ENCODE measurements at regions of chr19 and their contacts with region 1.

Region 1: DNA sequence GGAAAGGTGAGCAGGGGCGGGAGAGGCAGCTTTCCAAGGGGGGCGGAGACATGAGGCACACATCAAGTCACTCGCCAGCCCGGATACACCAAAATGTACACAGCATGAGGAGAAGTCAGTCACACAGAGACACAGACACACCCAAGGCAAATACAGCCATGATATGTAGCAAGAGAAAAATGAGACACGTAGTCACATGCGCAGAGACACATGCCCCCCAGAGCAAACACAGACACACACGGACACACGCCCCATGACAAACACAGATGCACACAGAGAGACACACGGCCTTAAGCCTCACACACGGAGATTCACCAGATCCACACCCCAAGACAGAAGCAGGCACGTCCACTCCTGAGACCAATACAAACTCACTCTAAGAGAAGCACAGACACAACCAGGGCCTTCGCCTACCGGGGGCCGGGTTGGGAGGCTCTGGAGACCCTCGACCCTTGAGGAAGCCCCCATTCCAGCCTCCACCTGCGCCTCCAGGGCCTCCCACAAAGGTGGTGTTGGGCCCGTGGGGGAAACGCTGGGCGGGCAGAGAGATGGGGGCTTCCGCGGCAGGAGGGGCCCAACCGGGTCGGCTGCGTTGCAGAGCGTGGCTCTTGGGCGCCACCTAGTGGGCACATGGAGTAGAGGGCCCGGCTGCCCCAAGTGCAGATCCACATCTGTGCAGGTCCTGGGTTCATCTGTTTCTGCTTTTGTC is 10.2 kb upstream of the TINCR start:
- DNase-seq: peak; percentile 83
- ATAC-seq: peak; percentile 86
- H3K4me3 ChIP-seq: peak overlapping the region; percentile 54 to 75 (median 58)
- H3K27ac ChIP-seq: peak overlapping the region; percentile 14
- H3K4me1 ChIP-seq: peaks cover 28% of the 10 kb centered on the region
- H3K27me3 ChIP-seq: no peaks in the 10 kb centered on the region
- CTCF ChIP-seq: peak; percentile 96
- EP300 ChIP-seq: no peak
- POLR2A ChIP-seq: peak in 1 of 2 experiments; percentile 39; a peak in 1 of 4 replicates
- RAD21 ChIP-seq: peak; percentile 94

Region 2: GRCh38 chr19:5542665-5543064 is 35.3 kb before region 1 on chr19:
- CTCF ChIA-PET with region 1: interaction called, 19 read pairs
- POLR2A ChIA-PET with region 1: no interaction called
- in situ Hi-C with region 1: loop called (anchors 5 kb)
- intact Hi-C with region 1: loop called (anchors 2 kb)
- DNase-seq: no peak
- ATAC-seq: no peak; the same call in 2 of the 3 replicates
- H3K4me3 ChIP-seq: no peak overlapping the region
- H3K27ac ChIP-seq: no peak overlapping the region
- H3K4me1 ChIP-seq: no peaks in the 10 kb centered on the region
- H3K27me3 ChIP-seq: peaks cover 0 to 5% of the 10 kb centered on the region in 2 experiments; a peak in 2 of 5 replicates
- CTCF ChIP-seq: peak; percentile 51
- EP300 ChIP-seq: no peak
- POLR2A ChIP-seq: no peak
- RAD21 ChIP-seq: no peak

Region 3: GRCh38 chr19:5547881-5548280 is 30.1 kb before region 1 on chr19:
- CTCF ChIA-PET with region 1: interaction called, 19 read pairs
- POLR2A ChIA-PET with region 1: no interaction called
- in situ Hi-C with region 1: loop called (anchors 5 kb)
- intact Hi-C with region 1: loop called (anchors 2 kb)
- DNase-seq: peak; percentile 38
- ATAC-seq: peak; percentile 71
- H3K4me3 ChIP-seq: no peak overlapping the region
- H3K27ac ChIP-seq: no peak overlapping the region
- H3K4me1 ChIP-seq: no peaks in the 10 kb centered on the region
- H3K27me3 ChIP-seq: peaks cover 0 to 9% of the 10 kb centered on the region in 2 experiments; a peak in 2 of 5 replicates
- CTCF ChIP-seq: peak; percentile 83
- EP300 ChIP-seq: no peak
- POLR2A ChIP-seq: no peak
- RAD21 ChIP-seq: peak; percentile 51; the same call in 1 of the 2 replicates

Region 4: DNA sequence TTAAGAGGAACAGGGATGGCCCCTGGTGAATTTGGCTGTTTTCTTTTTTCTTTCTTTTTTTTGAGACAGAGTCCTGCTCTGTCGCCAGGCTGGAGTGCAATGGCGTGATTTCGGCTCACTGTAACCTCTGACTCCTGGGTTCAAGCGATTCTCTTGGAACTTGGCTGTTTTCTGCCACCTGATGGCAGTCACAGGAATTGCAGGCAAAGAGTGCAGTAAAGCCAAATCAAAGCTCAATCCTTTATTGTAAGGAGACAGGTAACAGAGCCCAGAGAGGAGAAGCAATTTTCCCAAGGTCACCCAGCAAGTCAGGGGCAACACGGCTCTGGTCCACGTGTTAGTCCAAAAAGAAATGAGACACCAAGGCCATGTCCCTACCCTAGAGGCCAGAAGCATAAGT is 16.4 kb before region 1 on chr19:
- CTCF ChIA-PET with region 1: no interaction called
- POLR2A ChIA-PET with region 1: no interaction called
- in situ Hi-C with region 1: no loop called
- intact Hi-C with region 1: no loop called
- DNase-seq: no peak
- ATAC-seq: no peak
- H3K4me3 ChIP-seq: no peak overlapping the region
- H3K27ac ChIP-seq: no peak overlapping the region
- H3K4me1 ChIP-seq: no peaks in the 10 kb centered on the region
- H3K27me3 ChIP-seq: peaks cover 0 to 14% of the 10 kb centered on the region in 2 experiments; a peak in 2 of 5 replicates
- CTCF ChIP-seq: peak; percentile 54
- EP300 ChIP-seq: no peak
- POLR2A ChIP-seq: no peak
- RAD21 ChIP-seq: no peak

Region 5: GRCh38 chr19:5595129-5595528 is 17.2 kb after region 1 on chr19:
- CTCF ChIA-PET with region 1: no interaction called
- POLR2A ChIA-PET with region 1: no interaction called
- in situ Hi-C with region 1: no loop called
- intact Hi-C with region 1: no loop called
- DNase-seq: no peak
- ATAC-seq: peak; percentile 6; the same call in 1 of the 3 replicates
- H3K4me3 ChIP-seq: no peak overlapping the region
- H3K27ac ChIP-seq: peak overlapping the region; percentile 78
- H3K4me1 ChIP-seq: peaks cover 22% of the 10 kb centered on the region
- H3K27me3 ChIP-seq: no peaks in the 10 kb centered on the region
- CTCF ChIP-seq: no peak
- EP300 ChIP-seq: no peak
- POLR2A ChIP-seq: no peak
- RAD21 ChIP-seq: no peak

Region 6: GRCh38 chr19:5628461-5628860 is 50.5 kb after region 1 on chr19:
- CTCF ChIA-PET with region 1: no interaction called
- POLR2A ChIA-PET with region 1: no interaction called
- in situ Hi-C with region 1: no loop called
- intact Hi-C with region 1: no loop called
- DNase-seq: no peak
- ATAC-seq: no peak
- H3K4me3 ChIP-seq: no peak overlapping the region
- H3K27ac ChIP-seq: no peak overlapping the region
- H3K4me1 ChIP-seq: peaks cover 83% of the 10 kb centered on the region
- H3K27me3 ChIP-seq: peaks cover 0 to 7% of the 10 kb centered on the region in 2 experiments; a peak in 2 of 5 replicates
- CTCF ChIP-seq: no peak
- EP300 ChIP-seq: no peak
- POLR2A ChIP-seq: no peak
- RAD21 ChIP-seq: no peak

Measured in HepG2 (cell line).